CD4-positive, alpha-beta memory T cell (primary cell): ENCODE measurements at regions of chr22 and their contacts with region 1.

Region 1: DNA sequence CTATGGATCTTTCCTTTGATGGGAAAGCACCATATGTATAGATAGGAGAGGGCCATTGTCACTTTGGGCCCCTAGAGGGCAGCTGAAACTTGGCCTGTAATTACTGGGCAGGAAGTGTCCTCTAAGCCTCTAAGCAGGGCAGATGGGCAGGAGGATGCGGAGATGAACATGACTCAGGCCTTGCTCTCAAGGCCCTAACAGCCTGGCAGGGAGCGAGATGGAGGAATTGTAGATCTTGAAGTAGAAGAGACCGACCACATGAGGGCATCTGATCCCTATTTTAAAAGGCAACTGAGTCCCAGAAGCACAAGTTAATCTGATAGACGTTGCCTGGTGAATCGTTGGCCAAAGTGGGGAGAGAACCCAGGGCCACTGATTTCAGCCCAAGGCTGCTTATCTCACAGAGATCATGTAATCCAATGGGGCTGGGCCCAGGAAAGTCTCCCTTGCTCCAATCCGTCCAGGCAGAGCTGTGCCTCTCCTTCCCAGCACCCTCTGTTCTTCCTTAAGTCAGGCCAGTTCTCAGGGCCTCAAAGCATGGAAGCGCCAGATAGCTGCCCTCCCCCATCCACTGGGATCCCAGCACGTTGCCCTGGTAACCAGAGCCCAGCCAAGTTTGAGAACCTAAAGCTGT is 2.5 kb upstream of the SEPTIN3 start:
- DNase-seq: peak in 4 of 5 donors; percentile 39 to 58 (median 48)
- H3K4me3 ChIP-seq: no peak overlapping the region
- H3K4me3 Mint-ChIP-seq: no peak overlapping the region
- H3K27ac ChIP-seq: no peak overlapping the region
- H3K27ac Mint-ChIP-seq: peak overlapping the region in 1 of 7 donors; percentile 0
- H3K4me1 ChIP-seq: no peaks in the 10 kb centered on the region
- H3K4me1 Mint-ChIP-seq: peaks cover 0 to 4% (median 1%) of the 10 kb centered on the region in 4 donors
- H3K27me3 ChIP-seq: no peaks in the 10 kb centered on the region
- H3K27me3 Mint-ChIP-seq: peaks cover 3 to 8% of the 10 kb centered on the region in 2 donors

Region 2: GRCh38 chr22:42001121-42001520 is 34.4 kb after region 1 on chr22:
- CTCF ChIA-PET with region 1: no interaction called
- POLR2A ChIA-PET with region 1: no interaction called
- intact Hi-C with region 1: no loop called
- DNase-seq: no peak
- H3K4me3 ChIP-seq: no peak overlapping the region
- H3K4me3 Mint-ChIP-seq: peak overlapping the region in 1 of 8 donors; percentile 13
- H3K27ac ChIP-seq: no peak overlapping the region
- H3K27ac Mint-ChIP-seq: peak overlapping the region in 1 of 7 donors; percentile 32
- H3K4me1 ChIP-seq: peaks cover 21% of the 10 kb centered on the region
- H3K4me1 Mint-ChIP-seq: peaks cover 13 to 35% (median 19%) of the 10 kb centered on the region in 4 donors
- H3K27me3 ChIP-seq: no peaks in the 10 kb centered on the region
- H3K27me3 Mint-ChIP-seq: no peaks in the 10 kb centered on the region

Region 3: GRCh38 chr22:42114721-42115120 is 148.0 kb after region 1 on chr22:
- CTCF ChIA-PET with region 1: interaction called, 6 read pairs
- POLR2A ChIA-PET with region 1: no interaction called
- intact Hi-C with region 1: loop called (anchors 5 kb)
- DNase-seq: no peak
- H3K4me3 ChIP-seq: no peak overlapping the region
- H3K4me3 Mint-ChIP-seq: no peak overlapping the region
- H3K27ac ChIP-seq: no peak overlapping the region
- H3K27ac Mint-ChIP-seq: peak overlapping the region in 1 of 7 donors; percentile 3
- H3K4me1 ChIP-seq: peaks cover 11% of the 10 kb centered on the region
- H3K4me1 Mint-ChIP-seq: peaks cover 7 to 21% (median 14%) of the 10 kb centered on the region in 4 donors
- H3K27me3 ChIP-seq: no peaks in the 10 kb centered on the region
- H3K27me3 Mint-ChIP-seq: no peaks in the 10 kb centered on the region

Region 4: DNA sequence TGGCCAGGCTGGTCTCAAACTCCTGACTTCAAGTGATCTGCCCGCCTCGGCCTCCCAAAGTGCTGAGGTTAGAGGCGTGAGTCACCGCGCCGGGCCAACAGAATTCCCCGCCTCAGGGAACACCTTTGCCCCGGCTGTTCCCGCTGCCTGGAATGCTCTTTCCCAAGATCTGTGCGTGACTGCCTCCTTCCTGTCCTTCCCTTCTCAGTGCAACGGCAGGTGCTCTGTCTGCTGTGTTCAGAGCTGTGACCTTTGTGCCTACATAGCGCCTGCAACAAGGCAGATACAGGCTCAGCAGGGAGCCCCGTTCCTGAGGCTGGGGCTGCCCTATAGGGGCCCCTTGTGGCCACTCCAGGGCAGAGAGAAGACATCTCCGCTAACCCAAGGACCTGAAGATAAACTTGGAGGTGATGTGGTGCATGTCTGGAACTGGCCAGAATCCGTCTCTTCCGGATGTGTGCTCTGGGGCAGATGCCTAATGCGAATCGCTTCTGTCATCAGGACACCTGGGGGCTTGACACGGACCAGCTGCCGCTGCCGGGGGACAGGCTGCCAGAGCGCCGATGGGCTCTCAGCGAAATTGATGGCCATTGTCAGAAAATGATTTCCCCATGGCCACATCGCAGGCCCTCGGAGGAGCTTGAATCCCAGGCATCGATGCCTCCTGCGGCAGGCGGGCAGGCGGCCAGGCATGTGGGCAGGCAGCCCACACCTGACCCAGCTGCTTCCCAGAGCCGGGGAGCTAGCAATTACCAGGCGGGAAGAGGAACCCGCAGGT is 347.3 kb after region 1 on chr22:
- CTCF ChIA-PET with region 1: no interaction called
- POLR2A ChIA-PET with region 1: no interaction called
- intact Hi-C with region 1: loop called (anchors 1 kb)
- DNase-seq: peak; percentile 44 to 61 (median 52)
- H3K4me3 ChIP-seq: no peak overlapping the region
- H3K4me3 Mint-ChIP-seq: peak overlapping the region in 6 of 8 donors; percentile 36 to 78 (median 65)
- H3K27ac ChIP-seq: no peak overlapping the region
- H3K27ac Mint-ChIP-seq: peak overlapping the region in 5 of 7 donors; percentile 57 to 79 (median 72)
- H3K4me1 ChIP-seq: peaks cover 54% of the 10 kb centered on the region
- H3K4me1 Mint-ChIP-seq: peaks cover 27 to 55% (median 39%) of the 10 kb centered on the region in 4 donors
- H3K27me3 ChIP-seq: no peaks in the 10 kb centered on the region
- H3K27me3 Mint-ChIP-seq: no peaks in the 10 kb centered on the region

Region 5: GRCh38 chr22:42473484-42474193 is 506.9 kb after region 1 on chr22:
- CTCF ChIA-PET with region 1: interaction called, 16 read pairs
- POLR2A ChIA-PET with region 1: no interaction called
- intact Hi-C with region 1: loop called (anchors 1 kb)
- DNase-seq: peak in 4 of 5 donors; percentile 20 to 40 (median 27)
- H3K4me3 ChIP-seq: no peak overlapping the region
- H3K4me3 Mint-ChIP-seq: no peak overlapping the region
- H3K27ac ChIP-seq: no peak overlapping the region
- H3K27ac Mint-ChIP-seq: no peak overlapping the region
- H3K4me1 ChIP-seq: peaks cover 9% of the 10 kb centered on the region
- H3K4me1 Mint-ChIP-seq: peaks cover 5 to 7% (median 6%) of the 10 kb centered on the region in 4 donors
- H3K27me3 ChIP-seq: no peaks in the 10 kb centered on the region
- H3K27me3 Mint-ChIP-seq: peaks cover 0 to 4% of the 10 kb centered on the region in 2 donors